Left colon (tissue), 2 donors: ENCODE measurements at regions of chr1 and their contacts with region 1.

Region 1: GRCh38 chr1:112501810-112502641 is 6.7 kb upstream of the WNT2B start:
- DNase-seq: peak; percentile 69 to 82
- ATAC-seq: peak; percentile 86

Region 2: GRCh38 chr1:112706908-112707663 is 205.1 kb after region 1 on chr1 and contains the start of gene RHOC:
- intact Hi-C with region 1: loop called in 1 of 2 experiments (anchors 10 kb)
- DNase-seq: peak; percentile 89 to 90
- ATAC-seq: peak; percentile 69
- total RNA-seq, gene RHOC: 466 to 701 TPM